CD4-positive, alpha-beta memory T cell (primary cell): ENCODE measurements at regions of chr5 and their contacts with region 1.

Region 1: DNA sequence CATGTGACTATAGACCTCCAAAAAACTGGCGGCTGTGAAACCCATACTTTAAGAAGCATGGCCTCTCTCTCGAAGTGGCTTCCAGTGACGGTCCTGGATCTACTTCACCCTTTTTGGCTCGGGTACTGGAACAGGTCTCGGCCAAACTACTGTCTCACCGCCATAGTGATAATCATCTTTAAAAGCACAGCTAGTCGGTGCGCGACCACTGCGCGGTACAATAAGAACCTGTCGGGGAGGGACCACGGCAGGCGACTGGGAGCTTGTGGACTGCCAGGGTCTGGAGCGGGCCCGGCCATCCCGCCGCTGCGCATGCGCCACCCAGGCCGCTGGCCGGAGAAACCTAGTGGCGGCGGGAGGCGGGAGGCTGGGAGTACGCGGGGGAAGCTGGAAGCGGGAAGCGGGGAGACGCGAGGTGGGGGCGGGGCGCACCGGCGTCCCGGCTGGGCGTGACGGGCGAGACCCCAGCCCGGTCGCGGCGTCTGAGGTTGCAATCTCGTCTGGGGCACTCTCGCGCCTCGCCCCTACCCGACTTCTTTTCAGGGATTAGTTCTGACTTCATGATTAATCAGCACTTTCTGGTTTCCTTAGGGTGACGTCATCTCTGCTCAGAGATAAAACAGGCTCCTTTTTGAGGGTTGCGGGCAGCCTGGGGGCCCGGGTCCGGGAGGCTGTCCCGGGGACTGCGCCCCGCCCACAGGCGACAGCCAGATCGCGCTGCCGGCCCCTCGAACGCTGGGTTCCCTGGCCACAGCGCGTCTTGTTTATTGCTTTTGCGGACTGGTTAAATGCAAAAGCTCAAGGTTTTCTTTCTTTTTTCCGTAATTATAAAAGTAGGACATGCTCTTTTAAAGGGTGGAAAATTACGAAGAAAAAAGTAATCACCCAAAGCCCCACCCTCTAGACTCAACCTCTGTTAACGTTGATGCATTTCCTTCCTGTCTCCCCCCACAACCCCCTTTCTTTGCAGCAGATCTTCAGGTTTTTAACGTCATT is 266.8 kb downstream of the CWC27 start:
- DNase-seq: peak; percentile 86 to 94 (median 90)
- H3K4me3 ChIP-seq: peak overlapping the region; percentile 66 to 74
- H3K4me3 Mint-ChIP-seq: peak overlapping the region; percentile 66 to 92 (median 84)
- H3K27ac ChIP-seq: peak overlapping the region; percentile 90
- H3K27ac Mint-ChIP-seq: peak overlapping the region; percentile 80 to 100 (median 95)
- H3K4me1 ChIP-seq: peaks cover 30% of the 10 kb centered on the region
- H3K4me1 Mint-ChIP-seq: peaks cover 18 to 38% (median 28%) of the 10 kb centered on the region in 4 donors
- H3K27me3 ChIP-seq: no peaks in the 10 kb centered on the region
- H3K27me3 Mint-ChIP-seq: no peaks in the 10 kb centered on the region

Region 2: DNA sequence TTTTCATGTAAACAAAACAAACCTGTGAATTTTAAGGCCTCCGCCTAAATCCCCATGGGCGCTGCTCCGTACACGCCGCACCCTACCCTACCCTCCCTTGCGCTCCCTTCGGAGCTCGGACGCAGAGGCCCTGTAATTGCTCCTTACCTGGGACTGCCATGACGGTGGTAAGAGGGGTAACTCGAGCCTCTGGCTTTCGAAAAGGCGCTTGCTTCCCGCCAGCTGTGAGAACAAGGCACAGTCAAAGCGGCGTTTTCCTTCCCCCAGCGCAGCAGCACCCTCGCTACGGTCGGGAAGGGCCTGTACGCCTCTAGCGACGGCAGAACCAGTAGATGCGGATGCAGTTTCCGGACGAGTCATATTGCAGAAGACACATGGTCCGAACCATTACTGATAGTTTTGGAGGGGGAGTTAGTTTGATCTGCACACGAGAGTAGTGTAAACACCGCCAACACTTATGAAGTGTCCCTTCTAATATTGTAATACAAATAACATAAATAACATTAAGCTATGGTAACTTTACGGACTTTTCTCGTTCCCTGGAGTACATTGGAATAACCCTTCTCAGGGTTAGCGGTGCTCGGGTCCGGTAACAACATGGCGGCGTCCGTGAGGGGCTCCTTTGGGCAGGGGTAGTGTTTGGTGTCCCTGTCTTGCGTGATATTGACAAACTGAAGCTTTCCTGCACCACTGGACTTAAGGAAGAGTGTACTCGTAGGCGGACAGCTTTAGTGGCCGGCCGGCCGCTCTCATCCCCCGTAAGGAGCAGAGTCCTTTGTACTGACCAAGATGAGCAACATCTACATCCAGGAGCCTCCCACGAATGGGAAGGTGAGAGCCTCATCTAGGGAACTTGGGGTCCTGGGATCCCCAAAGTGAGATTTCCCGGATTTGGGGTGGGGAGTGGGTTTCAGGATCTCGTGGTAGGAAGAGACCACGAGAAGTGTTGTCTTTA is 266.9 kb before region 1 on chr5 and contains the starts of genes CWC27 and SREK1IP1:
- CTCF ChIA-PET with region 1: interaction called, 4 read pairs
- POLR2A ChIA-PET with region 1: interaction called, 6 read pairs
- intact Hi-C with region 1: loop called (anchors 2 kb)
- DNase-seq: peak; percentile 85 to 88 (median 85)
- H3K4me3 ChIP-seq: peak within 1 kb of the TSS; percentile 83 to 94
- H3K4me3 Mint-ChIP-seq: peak within 1 kb of the TSS; percentile 98 to 100 (median 100)
- H3K27ac ChIP-seq: peak within 1 kb of the TSS; percentile 86
- H3K27ac Mint-ChIP-seq: peak within 1 kb of the TSS; percentile 95 to 100 (median 98)
- H3K4me1 ChIP-seq: peaks cover 47% of the 10 kb centered on the region
- H3K4me1 Mint-ChIP-seq: peaks cover 49 to 82% (median 57%) of the 10 kb centered on the region in 4 donors
- H3K27me3 ChIP-seq: no peaks in the 10 kb centered on the region
- H3K27me3 Mint-ChIP-seq: no peaks in the 10 kb centered on the region
- total RNA-seq, gene CWC27: 16.8 to 17.8 TPM
- total RNA-seq, gene SREK1IP1: 18.4 to 20.2 TPM

Region 3: GRCh38 chr5:64958757-64959391 is 76.6 kb before region 1 on chr5:
- CTCF ChIA-PET with region 1: interaction called, 3 read pairs
- POLR2A ChIA-PET with region 1: no interaction called
- intact Hi-C with region 1: loop called (anchors 2 kb)
- DNase-seq: peak in 4 of 5 donors; percentile 6 to 21 (median 11)
- H3K4me3 ChIP-seq: no peak overlapping the region
- H3K4me3 Mint-ChIP-seq: no peak overlapping the region
- H3K27ac ChIP-seq: no peak overlapping the region
- H3K27ac Mint-ChIP-seq: no peak overlapping the region
- H3K4me1 ChIP-seq: no peaks in the 10 kb centered on the region
- H3K4me1 Mint-ChIP-seq: no peaks in the 10 kb centered on the region
- H3K27me3 ChIP-seq: no peaks in the 10 kb centered on the region
- H3K27me3 Mint-ChIP-seq: no peaks in the 10 kb centered on the region

Region 4: GRCh38 chr5:65076251-65076869 is 40.9 kb after region 1 on chr5:
- CTCF ChIA-PET with region 1: no interaction called
- POLR2A ChIA-PET with region 1: no interaction called
- intact Hi-C with region 1: loop called (anchors 5 kb)
- DNase-seq: peak; percentile 46 to 63 (median 53)
- H3K4me3 ChIP-seq: no peak overlapping the region
- H3K4me3 Mint-ChIP-seq: no peak overlapping the region
- H3K27ac ChIP-seq: no peak overlapping the region
- H3K27ac Mint-ChIP-seq: peak overlapping the region in 1 of 7 donors; percentile 43
- H3K4me1 ChIP-seq: no peaks in the 10 kb centered on the region
- H3K4me1 Mint-ChIP-seq: peaks cover 0 to 5% (median 5%) of the 10 kb centered on the region in 4 donors
- H3K27me3 ChIP-seq: no peaks in the 10 kb centered on the region
- H3K27me3 Mint-ChIP-seq: peaks cover 2 to 7% of the 10 kb centered on the region in 2 donors

Region 5: GRCh38 chr5:65394087-65394486 is 358.6 kb after region 1 on chr5:
- CTCF ChIA-PET with region 1: no interaction called
- POLR2A ChIA-PET with region 1: no interaction called
- intact Hi-C with region 1: no loop called
- DNase-seq: no peak
- H3K4me3 ChIP-seq: no peak overlapping the region
- H3K4me3 Mint-ChIP-seq: no peak overlapping the region
- H3K27ac ChIP-seq: no peak overlapping the region
- H3K27ac Mint-ChIP-seq: no peak overlapping the region
- H3K4me1 ChIP-seq: no peaks in the 10 kb centered on the region
- H3K4me1 Mint-ChIP-seq: no peaks in the 10 kb centered on the region
- H3K27me3 ChIP-seq: no peaks in the 10 kb centered on the region
- H3K27me3 Mint-ChIP-seq: peaks cover 0 to 2% of the 10 kb centered on the region in 2 donors